ENCODE measurements at regions of chr16 and their contacts with region 1.

Region 1: GRCh38 chr16:20806168-20807050 is at the starts of genes ERI2 and REXO5:
- DNase-seq: peak; percentile 71
- H3K4me3 Mint-ChIP-seq: peak within 1 kb of the TSS; percentile 98
- H3K27ac Mint-ChIP-seq: peak within 1 kb of the TSS; percentile 96
- H3K4me1 Mint-ChIP-seq: peaks cover 31% of the 10 kb centered on the region
- H3K27me3 Mint-ChIP-seq: no peaks in the 10 kb centered on the region
- total RNA-seq, gene ERI2: 13.9 and 14.2 TPM in 2 replicates
- total RNA-seq, gene REXO5: 7.7 and 8.3 TPM in 2 replicates

Region 2: GRCh38 chr16:20741554-20742285 is 64.7 kb before region 1 on chr16 and contains the start of gene THUMPD1:
- intact Hi-C with region 1: loop called (anchors 1 kb)
- DNase-seq: peak; percentile 90
- H3K4me3 Mint-ChIP-seq: peak within 1 kb of the TSS; percentile 97
- H3K27ac Mint-ChIP-seq: peak within 1 kb of the TSS; percentile 95
- H3K4me1 Mint-ChIP-seq: peaks cover 11% of the 10 kb centered on the region
- H3K27me3 Mint-ChIP-seq: no peaks in the 10 kb centered on the region
- total RNA-seq, gene THUMPD1: 42.4 and 43.3 TPM in 2 replicates

Region 3: DNA sequence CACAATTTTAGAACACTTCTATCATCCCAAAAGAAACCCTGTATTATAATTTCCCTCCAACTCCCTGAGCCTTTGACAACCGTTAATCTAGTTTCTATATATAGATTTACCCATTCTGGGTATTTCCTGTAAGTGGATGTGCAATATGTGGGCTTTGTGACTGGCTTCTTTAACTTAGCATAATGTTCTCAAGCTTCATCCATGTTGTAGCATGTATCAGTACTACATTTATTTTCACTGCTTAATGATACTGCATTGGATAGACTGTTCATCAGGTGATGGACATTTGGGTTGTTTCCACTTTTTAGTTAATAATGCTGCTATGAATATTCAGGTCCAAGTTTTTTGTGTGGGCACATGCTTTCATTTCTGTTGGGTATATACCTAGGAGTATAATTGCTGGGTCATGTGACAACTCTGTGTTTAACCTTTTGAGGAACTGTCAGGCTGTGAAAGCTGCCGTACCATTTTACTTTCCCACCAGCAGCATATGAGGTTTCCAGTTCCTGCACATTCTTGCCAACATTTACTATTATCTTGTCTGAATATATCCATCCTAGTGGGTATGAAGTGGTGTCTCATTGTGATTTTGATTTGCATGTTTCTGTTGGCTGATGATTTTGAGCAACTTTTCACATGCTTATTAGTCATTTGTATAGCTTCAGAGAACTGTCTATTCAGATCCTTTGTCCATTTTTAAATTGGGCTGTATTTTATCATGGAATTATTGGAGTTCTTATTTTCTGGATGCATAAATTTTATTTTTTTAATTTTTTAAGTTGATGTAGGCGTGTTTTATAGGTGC is 16.3 kb after region 1 on chr16:
- intact Hi-C with region 1: loop called (anchors 2 kb)
- DNase-seq: no peak
- H3K4me3 Mint-ChIP-seq: peak overlapping the region; percentile 24
- H3K27ac Mint-ChIP-seq: peak overlapping the region; percentile 15
- H3K4me1 Mint-ChIP-seq: peaks cover 16% of the 10 kb centered on the region
- H3K27me3 Mint-ChIP-seq: no peaks in the 10 kb centered on the region

Region 4: DNA sequence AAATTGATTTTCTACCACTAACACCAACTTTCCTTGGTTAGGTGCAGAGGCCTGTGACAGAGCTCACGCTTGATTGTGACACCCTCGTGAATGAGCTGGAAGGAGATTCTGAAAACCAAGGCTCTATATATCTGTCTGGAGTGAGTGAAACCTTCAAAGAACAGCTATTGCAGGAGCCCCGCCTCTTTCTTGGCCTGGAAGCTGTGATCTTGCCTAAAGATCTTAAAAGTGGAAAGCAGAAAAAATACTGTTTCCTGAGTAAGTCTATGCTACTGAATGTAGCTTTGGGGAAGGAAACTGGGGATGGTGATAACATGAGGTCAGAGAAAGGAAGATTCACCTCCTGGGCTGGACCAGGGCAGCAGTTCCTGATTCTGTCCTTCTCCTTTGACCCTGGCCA is 38.2 kb after region 1 on chr16:
- intact Hi-C with region 1: loop called (anchors 5 kb)
- DNase-seq: no peak
- H3K4me3 Mint-ChIP-seq: no peak overlapping the region
- H3K27ac Mint-ChIP-seq: peak overlapping the region; percentile 70
- H3K4me1 Mint-ChIP-seq: peaks cover 33% of the 10 kb centered on the region
- H3K27me3 Mint-ChIP-seq: no peaks in the 10 kb centered on the region

Region 5: GRCh38 chr16:20874088-20874581 is 67.7 kb after region 1 on chr16:
- intact Hi-C with region 1: loop called (anchors 2 kb)
- DNase-seq: no peak
- H3K4me3 Mint-ChIP-seq: peak overlapping the region; percentile 58
- H3K27ac Mint-ChIP-seq: peak overlapping the region; percentile 83
- H3K4me1 Mint-ChIP-seq: peaks cover 84% of the 10 kb centered on the region
- H3K27me3 Mint-ChIP-seq: peaks cover 2% of the 10 kb centered on the region

Region 6: DNA sequence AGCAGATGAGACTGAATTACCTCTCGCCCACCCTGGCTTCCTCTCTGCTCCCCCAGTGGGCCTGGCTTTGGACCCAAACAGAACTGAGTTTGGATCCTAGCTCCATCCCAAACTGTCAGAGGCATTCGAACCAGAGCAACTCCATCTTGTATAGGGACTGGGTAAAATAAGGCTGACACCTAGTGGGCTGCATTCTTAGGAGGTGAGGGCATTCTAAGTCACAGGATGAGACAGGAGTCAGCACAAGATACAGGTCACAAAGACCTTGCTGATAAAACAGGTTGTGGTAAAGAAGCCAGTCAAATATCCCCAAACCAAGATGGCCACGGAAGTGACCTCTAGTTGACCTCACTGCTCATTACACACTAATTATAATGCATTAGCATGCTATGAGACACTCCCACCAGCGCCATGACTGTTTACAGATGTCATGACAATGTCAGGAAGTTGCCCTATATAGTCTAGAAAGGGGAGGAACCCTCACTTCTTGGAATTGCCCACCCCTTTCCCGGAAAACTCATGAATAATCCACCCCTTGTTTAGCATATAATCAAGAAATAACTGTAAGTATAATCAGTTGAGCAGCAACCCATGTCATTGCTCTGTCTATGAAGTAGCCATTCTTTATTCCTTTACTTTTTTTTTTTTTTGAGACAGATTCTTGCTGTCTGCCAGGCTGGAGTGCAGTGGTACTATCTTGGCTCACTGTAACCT is 138.6 kb after region 1 on chr16:
- intact Hi-C with region 1: loop called (anchors 1 kb)
- DNase-seq: peak; percentile 57
- H3K4me3 Mint-ChIP-seq: no peak overlapping the region
- H3K27ac Mint-ChIP-seq: peak overlapping the region; percentile 71
- H3K4me1 Mint-ChIP-seq: peaks cover 50% of the 10 kb centered on the region
- H3K27me3 Mint-ChIP-seq: no peaks in the 10 kb centered on the region

Region 7: DNA sequence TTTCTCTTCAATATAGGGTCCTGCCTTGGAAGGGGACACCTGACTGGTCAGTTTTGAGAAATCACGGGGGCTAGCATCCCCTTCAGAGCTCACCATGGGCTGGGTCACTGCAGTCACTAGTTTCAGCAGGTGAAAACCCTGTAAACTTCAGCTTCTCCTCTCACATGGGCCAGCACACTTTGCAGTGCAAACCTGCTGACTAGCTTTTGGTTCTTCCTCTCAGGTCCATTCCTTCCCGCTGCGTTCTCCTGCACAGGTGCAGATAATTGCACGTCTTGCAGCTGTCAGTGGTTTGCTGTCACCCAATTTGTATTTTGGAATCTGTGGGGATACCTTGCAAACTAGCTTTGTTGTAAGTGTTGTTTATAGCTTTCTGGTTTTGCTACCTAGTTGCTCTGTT is 189.3 kb after region 1 on chr16:
- intact Hi-C with region 1: no loop called
- DNase-seq: no peak
- H3K4me3 Mint-ChIP-seq: no peak overlapping the region
- H3K27ac Mint-ChIP-seq: no peak overlapping the region
- H3K4me1 Mint-ChIP-seq: no peaks in the 10 kb centered on the region
- H3K27me3 Mint-ChIP-seq: peaks cover 14% of the 10 kb centered on the region

Region 8: GRCh38 chr16:21158208-21159110 is 352.1 kb after region 1 on chr16 and contains the start of gene LDAF1:
- intact Hi-C with region 1: loop called (anchors 2 kb)
- DNase-seq: peak; percentile 75
- H3K4me3 Mint-ChIP-seq: peak within 1 kb of the TSS; percentile 92
- H3K27ac Mint-ChIP-seq: peak within 1 kb of the TSS; percentile 11
- H3K4me1 Mint-ChIP-seq: peaks cover 8% of the 10 kb centered on the region
- H3K27me3 Mint-ChIP-seq: no peaks in the 10 kb centered on the region
- total RNA-seq, gene LDAF1: 6.5 and 6.6 TPM in 2 replicates

Measured in activated T-helper 1 cell treated with anti-CD3 and anti-CD28 coated beads, Interleukin-12 subunit alpha, Interleukin-12 subunit beta, Interleukin-2, Interleukin-4 antibody, amounts not matched to agents 30 ng/mL and 10 ng/mL and 1 ng/mL, durations not matched to agents 14 hours and 24 hours and 36 hours (primary cell).